Right cardiac atrium (tissue), 5 donors: ENCODE measurements at regions of chr10 and their contacts with region 1.

Region 1: GRCh38 chr10:931416-932318 is at the start of gene LARP4B:
- DNase-seq: peak; percentile 97 to 99 (median 99)
- ATAC-seq: peak; percentile 99 to 100
- H3K4me3 ChIP-seq: peak within 1 kb of the TSS; percentile 99
- H3K27ac ChIP-seq: peak within 1 kb of the TSS; percentile 99
- H3K4me1 ChIP-seq: peaks cover 3% of the 10 kb centered on the region
- H3K27me3 ChIP-seq: no peaks in the 10 kb centered on the region
- total RNA-seq, gene LARP4B: 46.9 to 59.3 (median 50.5) TPM

Region 2: GRCh38 chr10:689433-690371 is 242.0 kb before region 1 on chr10 and contains the start of gene DIP2C:
- intact Hi-C with region 1: loop called in 1 of 4 experiments (anchors 10 kb)
- DNase-seq: peak; percentile 87 to 94 (median 93)
- ATAC-seq: peak; percentile 83 to 89
- H3K4me3 ChIP-seq: peak within 1 kb of the TSS; percentile 95
- H3K27ac ChIP-seq: peak within 1 kb of the TSS; percentile 79
- H3K4me1 ChIP-seq: peaks cover 4% of the 10 kb centered on the region
- H3K27me3 ChIP-seq: no peaks in the 10 kb centered on the region
- total RNA-seq, gene DIP2C: 23.7 to 31.5 (median 26.9) TPM

Region 3: DNA sequence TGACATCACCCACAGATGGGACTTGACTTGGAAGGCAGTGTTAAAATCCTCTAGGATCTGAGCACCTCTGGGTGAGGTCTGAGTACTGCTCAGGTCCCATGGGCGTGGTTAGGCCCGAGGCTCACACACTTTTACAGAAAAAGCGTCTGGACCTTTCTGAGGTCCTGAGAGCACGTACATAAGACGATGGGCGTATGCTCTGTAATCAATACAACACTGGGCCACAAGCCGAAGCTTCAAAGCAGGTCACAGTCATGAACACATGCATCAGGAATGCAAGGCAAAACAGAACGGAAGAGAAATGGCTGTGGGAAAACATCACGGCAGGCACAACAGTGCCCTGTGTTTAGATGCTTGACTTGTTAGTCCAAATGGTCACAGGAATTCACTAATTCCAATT is 112.3 kb before region 1 on chr10:
- intact Hi-C with region 1: loop called in 1 of 4 experiments (anchors 5 kb)
- DNase-seq: no peak
- ATAC-seq: no peak
- H3K4me3 ChIP-seq: no peak overlapping the region
- H3K27ac ChIP-seq: no peak overlapping the region
- H3K4me1 ChIP-seq: peaks cover 4% of the 10 kb centered on the region
- H3K27me3 ChIP-seq: no peaks in the 10 kb centered on the region

Region 4: GRCh38 chr10:987870-988666 is 56.4 kb after region 1 on chr10 and contains the start of gene GTPBP4:
- intact Hi-C with region 1: loop called in 1 of 4 experiments (anchors 10 kb)
- DNase-seq: peak; percentile 99 to 100 (median 100)
- ATAC-seq: peak; percentile 99
- H3K4me3 ChIP-seq: peak within 1 kb of the TSS; percentile 83
- H3K27ac ChIP-seq: peak within 1 kb of the TSS; percentile 59
- H3K4me1 ChIP-seq: peaks cover 10% of the 10 kb centered on the region
- H3K27me3 ChIP-seq: no peaks in the 10 kb centered on the region
- total RNA-seq, gene GTPBP4: 22.9 to 29.8 (median 27.5) TPM

Region 5: GRCh38 chr10:1010703-1011102 is 79.0 kb after region 1 on chr10:
- intact Hi-C with region 1: no loop called
- DNase-seq: no peak
- ATAC-seq: peak; percentile 28 to 38
- H3K4me3 ChIP-seq: no peak overlapping the region
- H3K27ac ChIP-seq: no peak overlapping the region
- H3K4me1 ChIP-seq: no peaks in the 10 kb centered on the region
- H3K27me3 ChIP-seq: no peaks in the 10 kb centered on the region